ENCODE measurements at regions of chr11 and their contacts with region 1.

Region 1: DNA sequence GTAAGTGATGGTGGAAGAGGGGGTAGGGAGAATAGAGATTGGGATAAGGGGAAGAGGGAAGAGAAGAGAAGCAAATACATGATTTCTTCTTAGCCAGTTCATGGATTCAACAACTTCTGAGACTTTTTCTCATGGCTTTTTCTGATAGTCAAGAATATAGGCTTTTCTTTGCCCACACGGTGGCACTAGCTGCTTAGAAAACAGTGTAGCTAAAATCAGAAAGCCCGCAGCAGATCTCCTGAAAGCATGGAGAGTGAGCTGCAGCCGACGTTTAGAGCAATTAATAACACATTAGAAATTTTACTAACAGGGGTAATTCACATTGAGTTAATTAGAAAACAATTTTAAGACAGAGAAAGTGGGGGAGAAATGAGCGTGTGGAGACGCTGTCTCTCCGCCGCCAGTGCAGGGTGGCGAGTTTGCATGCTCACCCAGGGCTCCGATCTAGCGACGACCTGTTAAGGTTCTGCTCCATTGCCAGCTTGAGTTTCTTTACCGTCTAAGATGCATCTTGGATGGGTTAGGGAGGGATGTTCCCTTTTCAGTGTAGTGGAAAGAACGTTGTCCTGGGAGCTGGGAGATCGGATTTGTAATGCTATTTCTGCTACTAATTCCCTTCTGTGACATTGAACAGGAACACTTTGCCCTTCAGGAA is 3.3 kb upstream of the RAG1 start:
- DNase-seq: peak in 7 of 9 experiments; percentile 17 to 73 (median 45)
- ATAC-seq: peak; percentile 59
- H3K4me3 ChIP-seq: peak overlapping the region in 1 of 2 experiments; percentile 23
- H3K4me3 Mint-ChIP-seq: peak overlapping the region; percentile 71
- H3K27ac ChIP-seq: no peak overlapping the region
- H3K27ac Mint-ChIP-seq: no peak overlapping the region
- H3K4me1 ChIP-seq: peaks cover 3% of the 10 kb centered on the region
- H3K4me1 Mint-ChIP-seq: peaks cover 13% of the 10 kb centered on the region
- H3K27me3 ChIP-seq: no peaks in the 10 kb centered on the region
- H3K27me3 Mint-ChIP-seq: peaks cover 27% of the 10 kb centered on the region
- CTCF ChIP-seq: peak; percentile 71

Region 2: GRCh38 chr11:36672813-36673450 is 108.4 kb after region 1 on chr11:
- CTCF ChIA-PET with region 1: interaction called, 27 read pairs
- POLR2A ChIA-PET with region 1: no interaction called
- intact Hi-C with region 1: loop called in 1 of 2 experiments (anchors 5 kb)
- DNase-seq: peak in 3 of 9 experiments; percentile 16 to 62 (median 50)
- ATAC-seq: no peak
- H3K4me3 ChIP-seq: no peak overlapping the region
- H3K4me3 Mint-ChIP-seq: no peak overlapping the region
- H3K27ac ChIP-seq: no peak overlapping the region
- H3K27ac Mint-ChIP-seq: no peak overlapping the region
- H3K4me1 ChIP-seq: no peaks in the 10 kb centered on the region
- H3K4me1 Mint-ChIP-seq: no peaks in the 10 kb centered on the region
- H3K27me3 ChIP-seq: peaks cover 0 to 4% of the 10 kb centered on the region in 2 experiments
- H3K27me3 Mint-ChIP-seq: peaks cover 31% of the 10 kb centered on the region
- CTCF ChIP-seq: peak; percentile 97

Measured in CD8-positive, alpha-beta T cell (primary cell).